ENCODE measurements at regions of chr7 and their contacts with region 1.

Region 1: DNA sequence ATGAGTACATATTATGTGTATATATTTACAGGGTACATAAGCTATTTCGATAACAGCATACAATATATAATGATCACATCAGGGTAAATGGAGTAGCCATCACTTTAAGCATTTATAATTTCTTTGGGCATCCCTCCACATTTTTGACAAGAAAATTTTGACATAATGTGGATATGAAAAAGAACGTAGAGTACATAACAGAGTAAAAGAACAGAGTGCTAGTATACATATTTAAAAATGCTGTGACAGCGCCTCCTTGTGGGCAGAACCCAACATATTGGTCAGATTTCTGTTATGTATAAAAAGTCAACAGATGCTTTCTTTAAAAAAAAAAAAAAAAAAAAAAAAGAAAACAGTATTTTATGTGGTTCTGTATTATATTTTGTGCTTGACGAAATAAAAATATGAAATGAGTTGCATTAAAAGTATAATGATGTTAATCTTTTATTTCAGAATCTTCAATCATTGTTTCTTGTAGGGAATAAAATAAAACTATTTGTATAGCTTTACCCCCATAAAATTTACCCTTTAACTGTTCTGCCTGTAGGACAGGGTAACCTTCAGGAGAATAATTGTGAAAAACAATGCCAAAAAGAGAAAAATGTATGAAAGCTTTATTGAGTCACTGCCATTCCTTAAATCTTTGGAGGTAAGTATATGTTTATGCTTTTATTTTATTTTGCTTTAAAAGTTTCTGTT is 18.3 kb upstream of the HBP1 start:
- DNase-seq: no peak
- H3K4me3 ChIP-seq: no peak overlapping the region
- H3K27ac ChIP-seq: no peak overlapping the region
- H3K4me1 ChIP-seq: peaks cover 7% of the 10 kb centered on the region
- H3K27me3 ChIP-seq: no peaks in the 10 kb centered on the region
- CTCF ChIP-seq: peak in 2 of 3 experiments; percentile 66 to 69
- POLR2A ChIP-seq: no peak

Region 2: DNA sequence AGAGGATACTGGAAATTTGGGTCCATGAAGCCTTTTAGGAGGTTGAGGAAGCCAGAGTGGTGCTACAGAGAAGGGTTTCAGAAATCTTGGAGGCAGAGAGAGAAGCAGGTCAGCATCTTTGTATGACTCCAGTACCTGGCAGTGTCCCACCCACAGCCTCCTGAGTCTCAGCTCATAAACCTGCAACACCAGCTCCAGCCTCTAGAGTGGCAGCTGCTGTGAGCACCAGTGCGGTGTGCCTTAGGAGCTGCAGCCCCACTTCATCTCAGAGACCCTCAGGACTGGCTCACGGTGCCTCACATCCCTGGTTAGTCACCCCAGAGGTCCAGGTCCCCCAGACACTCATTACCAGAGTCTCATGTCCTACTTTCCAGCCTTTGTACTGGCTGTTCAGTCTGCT is 190.8 kb before region 1 on chr7:
- intact Hi-C with region 1: loop called (anchors 10 kb)
- DNase-seq: no peak
- H3K4me3 ChIP-seq: no peak overlapping the region
- H3K27ac ChIP-seq: no peak overlapping the region
- H3K4me1 ChIP-seq: no peaks in the 10 kb centered on the region
- H3K27me3 ChIP-seq: no peaks in the 10 kb centered on the region
- CTCF ChIP-seq: no peak
- POLR2A ChIP-seq: no peak

Region 3: DNA sequence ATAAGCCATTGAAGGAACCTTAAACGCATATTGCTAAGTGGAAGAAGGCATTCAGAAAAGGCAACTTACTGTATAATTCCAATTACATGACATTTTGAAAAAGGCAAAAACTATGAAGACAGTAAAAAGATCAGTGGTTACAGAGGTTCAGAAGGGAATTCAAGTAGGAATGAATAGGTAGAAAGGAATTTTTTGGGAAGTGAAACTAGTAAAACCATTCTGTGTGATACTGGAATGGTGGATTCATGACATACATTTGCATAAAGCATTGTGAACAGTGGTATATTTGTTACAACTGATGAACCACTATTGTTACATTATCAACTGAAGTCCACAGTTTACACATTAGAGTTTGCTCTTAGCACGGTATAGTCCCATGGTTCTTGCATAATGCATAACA is 205.1 kb after region 1 on chr7:
- intact Hi-C with region 1: no loop called
- DNase-seq: no peak
- H3K4me3 ChIP-seq: no peak overlapping the region
- H3K27ac ChIP-seq: no peak overlapping the region
- H3K4me1 ChIP-seq: no peaks in the 10 kb centered on the region
- H3K27me3 ChIP-seq: no peaks in the 10 kb centered on the region
- CTCF ChIP-seq: no peak
- POLR2A ChIP-seq: no peak

Measured in vagina (tissue), 2 donors.